MCF 10A (cell line): ENCODE measurements at regions of chr11 and their contacts with region 1.

Region 1: GRCh38 chr11:8033305-8034105 is 46.4 kb downstream of the EIF3F start:
- DNase-seq: peak; percentile 75
- H3K4me3 Mint-ChIP-seq: no peak overlapping the region
- H3K27ac Mint-ChIP-seq: no peak overlapping the region
- H3K4me1 Mint-ChIP-seq: peaks cover 5% of the 10 kb centered on the region
- H3K27me3 Mint-ChIP-seq: peaks cover 54% of the 10 kb centered on the region
- CTCF ChIP-seq: peak; percentile 85

Region 2: DNA sequence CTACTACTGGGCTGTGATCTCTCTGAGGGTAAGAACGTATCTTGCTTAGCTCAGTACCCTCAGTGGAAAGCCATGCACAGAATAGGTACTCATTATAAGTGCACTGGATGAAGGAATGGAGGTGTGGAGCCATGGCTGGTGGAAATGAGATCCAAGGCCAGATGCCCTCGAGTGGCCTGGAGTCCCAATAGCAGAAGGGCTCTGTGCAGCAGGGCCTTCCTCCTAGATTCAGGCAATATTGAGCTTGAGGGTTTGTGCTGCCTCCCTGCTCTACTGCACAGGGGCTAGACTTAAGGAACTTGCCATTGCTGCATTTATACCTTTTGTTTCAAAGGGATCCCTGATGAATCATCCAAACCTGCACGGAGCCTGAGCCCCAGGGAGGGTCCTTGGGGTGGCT is 13.9 kb after region 1 on chr11:
- CTCF ChIA-PET with region 1: interaction called, 17 read pairs
- POLR2A ChIA-PET with region 1: no interaction called
- intact Hi-C with region 1: no loop called
- DNase-seq: no peak
- H3K4me3 Mint-ChIP-seq: no peak overlapping the region
- H3K27ac Mint-ChIP-seq: no peak overlapping the region
- H3K4me1 Mint-ChIP-seq: no peaks in the 10 kb centered on the region
- H3K27me3 Mint-ChIP-seq: peaks cover 66% of the 10 kb centered on the region
- CTCF ChIP-seq: no peak

Region 3: GRCh38 chr11:8070417-8071115 is 37.1 kb after region 1 on chr11:
- CTCF ChIA-PET with region 1: interaction called, 29 read pairs
- POLR2A ChIA-PET with region 1: no interaction called
- intact Hi-C with region 1: loop called (anchors 1 kb)
- DNase-seq: peak; percentile 38
- H3K4me3 Mint-ChIP-seq: no peak overlapping the region
- H3K27ac Mint-ChIP-seq: no peak overlapping the region
- H3K4me1 Mint-ChIP-seq: peaks cover 17% of the 10 kb centered on the region
- H3K27me3 Mint-ChIP-seq: peaks cover 15% of the 10 kb centered on the region
- CTCF ChIP-seq: peak; percentile 18

Region 4: DNA sequence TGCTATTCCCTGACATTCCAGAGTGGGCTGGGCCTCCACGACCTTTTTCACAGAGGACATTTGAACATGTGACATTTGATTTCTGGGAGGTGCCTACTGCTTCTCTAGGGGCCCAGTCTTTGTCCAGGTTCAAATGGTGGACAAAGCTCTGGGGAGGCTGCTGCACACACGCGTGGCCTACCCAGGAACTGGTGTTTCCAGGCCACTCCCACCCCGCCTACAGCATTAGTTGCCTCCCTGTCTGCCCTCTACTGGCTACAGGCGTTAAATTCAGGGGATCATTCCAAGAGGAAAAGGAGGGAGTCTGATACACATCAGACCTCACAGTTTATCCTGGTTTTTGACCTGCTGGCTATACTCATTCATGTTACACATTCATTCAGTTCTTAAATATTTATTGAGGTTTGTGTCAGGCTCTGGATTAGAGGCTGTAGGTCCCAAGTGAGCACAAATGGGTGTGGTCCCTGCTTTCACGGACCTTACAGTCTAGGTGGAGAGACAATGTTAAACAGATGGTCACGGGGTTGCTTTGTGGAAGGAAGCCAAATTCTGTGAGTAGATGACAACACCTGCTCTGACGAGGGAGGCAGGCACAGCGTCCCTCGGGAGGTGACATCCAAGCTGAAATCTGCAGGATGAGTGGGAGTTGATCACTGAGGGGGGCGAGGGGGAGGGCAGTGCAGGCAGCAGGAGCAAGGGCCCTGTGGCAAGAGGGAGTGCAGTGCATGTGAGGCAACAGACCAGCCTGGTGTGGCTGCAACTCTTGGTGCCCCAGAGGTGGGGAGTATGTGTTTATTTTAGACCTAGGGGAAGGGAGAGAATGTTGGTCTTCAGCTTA is 59.3 kb after region 1 on chr11:
- CTCF ChIA-PET with region 1: interaction called, 786 read pairs
- POLR2A ChIA-PET with region 1: interaction called, 9 read pairs
- intact Hi-C with region 1: loop called (anchors 1 kb)
- DNase-seq: peak; percentile 76
- H3K4me3 Mint-ChIP-seq: no peak overlapping the region
- H3K27ac Mint-ChIP-seq: no peak overlapping the region
- H3K4me1 Mint-ChIP-seq: no peaks in the 10 kb centered on the region
- H3K27me3 Mint-ChIP-seq: no peaks in the 10 kb centered on the region
- CTCF ChIP-seq: peak; percentile 50

Region 5: DNA sequence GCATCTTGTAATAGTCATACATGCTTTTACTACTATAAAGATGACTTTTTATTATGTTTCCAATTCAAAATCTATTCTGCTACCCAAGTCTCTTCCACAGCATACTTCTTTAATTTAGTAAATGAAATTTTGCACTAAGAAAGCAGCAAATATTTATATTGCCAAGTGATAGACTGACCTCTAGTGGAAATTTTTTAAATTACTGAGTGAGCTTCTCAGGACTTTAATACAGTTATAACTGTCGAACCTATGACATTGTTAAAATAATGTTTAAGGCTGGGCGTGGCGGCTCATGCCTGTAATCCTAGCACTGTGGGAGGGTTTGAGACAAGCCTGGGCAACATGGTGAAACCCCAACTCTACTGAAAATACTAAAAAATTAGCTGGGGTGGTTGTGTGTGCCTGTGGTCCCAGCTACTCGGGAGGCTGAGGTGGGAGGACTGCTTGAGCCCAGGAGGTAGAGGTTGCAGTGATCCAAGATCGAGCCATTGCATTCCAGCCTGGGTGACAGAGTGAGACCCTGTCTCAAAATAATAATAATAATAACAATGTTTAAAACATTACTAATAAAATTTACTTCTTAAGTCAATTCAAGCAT is 533.2 kb after region 1 on chr11:
- CTCF ChIA-PET with region 1: interaction called, 16 read pairs
- POLR2A ChIA-PET with region 1: interaction called, 3 read pairs
- intact Hi-C with region 1: no loop called
- DNase-seq: peak; percentile 59
- H3K4me3 Mint-ChIP-seq: no peak overlapping the region
- H3K27ac Mint-ChIP-seq: no peak overlapping the region
- H3K4me1 Mint-ChIP-seq: peaks cover 6% of the 10 kb centered on the region
- H3K27me3 Mint-ChIP-seq: peaks cover 38% of the 10 kb centered on the region
- CTCF ChIP-seq: peak; percentile 64